SK-N-SH (cell line): ENCODE measurements at regions of chr2 and their contacts with region 1.

Region 1: DNA sequence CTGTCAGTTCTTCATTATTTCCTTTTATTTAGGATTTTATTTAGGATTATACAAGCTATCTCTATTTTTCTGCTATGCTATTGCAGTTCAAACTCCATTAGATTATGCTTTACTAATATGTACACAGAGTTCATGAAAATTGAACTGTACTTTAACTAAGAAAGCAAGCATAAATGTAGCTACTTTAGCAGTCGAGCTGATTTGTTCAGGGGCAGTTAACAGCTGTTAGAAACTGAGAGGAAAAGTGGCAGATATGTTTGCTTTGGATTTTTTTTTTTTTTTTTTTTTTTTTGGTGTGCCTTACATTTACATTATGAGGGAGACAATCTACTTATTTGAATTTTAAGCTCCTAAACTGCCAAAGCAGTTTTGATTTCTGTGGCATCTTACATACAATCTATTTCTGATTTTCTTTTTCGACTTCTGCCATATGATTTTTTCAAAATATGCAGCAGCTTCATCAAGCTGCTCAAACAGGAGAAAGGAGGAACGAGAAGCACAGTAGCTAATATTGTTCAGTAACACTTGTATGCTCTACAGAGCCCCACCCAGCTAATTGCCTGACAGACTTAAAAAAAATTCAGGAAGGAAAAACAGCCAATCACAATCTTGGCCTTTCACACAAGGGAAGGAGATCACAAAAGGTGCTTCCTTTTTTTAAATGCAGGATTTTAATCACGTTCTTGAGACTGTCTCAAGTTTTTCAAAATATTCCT is 233.4 kb upstream of the SIX3 start:
- DNase-seq: no peak
- H3K4me3 ChIP-seq: no peak overlapping the region
- H3K27ac ChIP-seq: peak overlapping the region in 1 of 2 experiments; percentile 100; a peak in 2 of 4 replicates
- H3K4me1 ChIP-seq: peaks cover 0 to 74% of the 10 kb centered on the region in 2 experiments; a peak in 2 of 4 replicates
- H3K27me3 ChIP-seq: no peaks in the 10 kb centered on the region
- CTCF ChIP-seq: no peak
- EP300 ChIP-seq: no peak
- RAD21 ChIP-seq: no peak

Region 2: GRCh38 chr2:44560352-44560751 is 147.8 kb before region 1 on chr2:
- CTCF ChIA-PET with region 1: interaction called, 16 read pairs
- POLR2A ChIA-PET with region 1: no interaction called
- DNase-seq: no peak
- H3K4me3 ChIP-seq: no peak overlapping the region
- H3K27ac ChIP-seq: no peak overlapping the region
- H3K4me1 ChIP-seq: peaks cover 0 to under 1% of the 10 kb centered on the region in 2 experiments; a peak in 2 of 4 replicates
- H3K27me3 ChIP-seq: no peaks in the 10 kb centered on the region
- CTCF ChIP-seq: peak; percentile 56
- EP300 ChIP-seq: no peak
- RAD21 ChIP-seq: peak; percentile 63

Region 3: DNA sequence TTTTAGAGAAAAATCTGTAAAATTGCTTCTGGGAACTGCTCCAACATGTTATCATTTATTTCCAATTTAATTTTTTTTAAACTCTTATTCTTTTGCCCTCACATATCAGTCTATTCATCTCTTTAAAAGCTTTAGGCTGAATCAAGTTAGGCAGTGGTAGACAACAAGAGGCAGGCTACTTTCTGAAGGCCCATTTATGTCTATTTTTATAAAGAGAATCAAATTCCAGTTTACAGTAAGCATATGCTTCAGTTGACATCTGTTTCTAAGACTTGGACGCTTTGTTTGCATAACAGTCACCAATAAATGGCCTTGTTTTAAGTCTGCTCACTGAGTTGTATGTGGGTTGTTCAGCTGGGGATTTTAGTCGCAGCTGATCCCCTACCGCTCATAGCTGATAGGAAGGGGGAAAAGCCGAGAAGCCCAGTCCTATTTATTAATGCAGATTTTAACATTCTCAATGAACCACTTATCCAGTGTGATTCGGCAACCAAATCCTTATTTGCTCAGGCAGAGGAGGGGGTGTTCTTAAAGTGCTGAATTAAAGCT is 27.0 kb before region 1 on chr2:
- CTCF ChIA-PET with region 1: interaction called, 14 read pairs
- POLR2A ChIA-PET with region 1: interaction called, 26 read pairs
- DNase-seq: peak; percentile 78
- H3K4me3 ChIP-seq: peak overlapping the region; percentile 18 to 35; a peak in 3 of 4 replicates
- H3K27ac ChIP-seq: peak overlapping the region; percentile 49 to 100; a peak in 3 of 4 replicates
- H3K4me1 ChIP-seq: peaks cover 10 to 70% of the 10 kb centered on the region in 2 experiments; a peak in 2 of 4 replicates
- H3K27me3 ChIP-seq: no peaks in the 10 kb centered on the region
- CTCF ChIP-seq: no peak
- EP300 ChIP-seq: peak; percentile 34 to 97; a peak in 3 of 4 replicates
- RAD21 ChIP-seq: peak; percentile 48

Region 4: DNA sequence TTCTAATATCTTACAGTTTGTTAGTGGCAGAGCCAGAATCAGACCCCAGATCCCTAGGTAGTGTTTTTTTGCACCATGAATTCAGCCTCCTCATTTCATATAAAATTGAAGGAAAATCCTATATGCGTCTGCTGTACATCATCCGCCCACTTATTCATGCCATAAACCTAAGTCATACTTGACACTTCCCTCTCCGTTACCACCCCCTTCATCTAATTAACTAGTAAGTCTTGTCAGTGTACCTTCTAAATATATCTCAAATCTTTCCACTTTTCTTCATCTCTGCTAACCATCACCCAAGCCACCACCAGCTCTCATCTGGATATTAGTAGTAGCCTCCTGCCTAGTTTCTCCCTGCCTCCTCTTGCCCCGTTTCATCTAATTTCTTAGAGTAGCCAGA is 15.3 kb before region 1 on chr2:
- CTCF ChIA-PET with region 1: interaction called, 66 read pairs
- POLR2A ChIA-PET with region 1: interaction called, 7 read pairs
- DNase-seq: no peak
- H3K4me3 ChIP-seq: no peak overlapping the region
- H3K27ac ChIP-seq: peak overlapping the region in 1 of 2 experiments; percentile 98; a peak in 2 of 4 replicates
- H3K4me1 ChIP-seq: peaks cover 0 to 50% of the 10 kb centered on the region in 2 experiments; a peak in 2 of 4 replicates
- H3K27me3 ChIP-seq: no peaks in the 10 kb centered on the region
- CTCF ChIP-seq: no peak
- EP300 ChIP-seq: no peak
- RAD21 ChIP-seq: no peak

Region 5: DNA sequence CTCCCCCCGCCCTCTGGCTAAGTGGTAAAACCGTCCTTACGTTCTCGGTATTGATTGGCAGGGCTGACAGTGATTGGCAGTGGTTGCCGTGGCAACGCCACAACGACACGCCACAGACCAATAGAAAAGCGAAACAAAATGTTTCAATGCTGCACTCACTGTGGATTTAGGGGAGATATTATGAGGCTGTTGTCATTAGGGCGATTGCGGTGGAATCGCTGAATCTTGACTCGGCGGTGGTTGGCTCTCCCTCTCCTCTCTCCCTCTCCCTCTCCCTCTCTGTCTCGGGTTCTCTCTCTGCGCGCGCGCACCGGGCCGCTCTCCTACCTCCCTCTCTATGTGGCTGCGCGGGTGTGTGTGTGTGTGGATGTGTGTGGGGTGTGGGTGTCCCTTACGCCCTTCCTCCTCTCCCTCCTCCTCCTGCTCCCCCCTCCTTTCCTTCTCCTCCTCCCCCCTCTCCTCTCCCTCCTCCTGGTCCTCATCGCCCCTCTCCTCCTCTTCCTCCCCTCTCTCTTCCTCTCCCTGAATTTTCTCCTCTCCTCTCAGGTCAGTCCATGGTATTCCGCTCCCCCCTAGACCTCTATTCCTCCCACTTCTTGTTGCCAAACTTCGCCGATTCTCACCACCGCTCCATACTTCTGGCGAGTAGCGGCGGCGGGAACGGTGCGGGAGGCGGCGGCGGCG is 233.6 kb after region 1 on chr2 and contains the start of gene SIX3:
- CTCF ChIA-PET with region 1: interaction called, 17 read pairs
- POLR2A ChIA-PET with region 1: interaction called, 6 read pairs
- DNase-seq: peak; percentile 89
- H3K4me3 ChIP-seq: peak within 1 kb of the TSS; percentile 56 to 60
- H3K27ac ChIP-seq: peak within 1 kb of the TSS in 1 of 2 experiments; percentile 92; a peak in 2 of 4 replicates
- H3K4me1 ChIP-seq: peaks cover 0 to 42% of the 10 kb centered on the region in 2 experiments; a peak in 2 of 4 replicates
- H3K27me3 ChIP-seq: peaks cover 74% of the 10 kb centered on the region
- CTCF ChIP-seq: no peak
- EP300 ChIP-seq: peak in 1 of 2 experiments; percentile 21; a peak in 1 of 4 replicates
- RAD21 ChIP-seq: no peak
- polyA plus RNA-seq, gene SIX3: 0.58 and 0.67 TPM in 2 replicates